Psoas muscle (tissue), 8 donors: ENCODE measurements at regions of chr2 and their contacts with region 1.

Region 1: GRCh38 chr2:235116885-235117492 is 165.2 kb downstream of the SH3BP4 start:
- DNase-seq: no peak
- ATAC-seq: no peak
- H3K4me3 ChIP-seq: no peak overlapping the region
- H3K27ac ChIP-seq: no peak overlapping the region
- H3K4me1 ChIP-seq: no peaks in the 10 kb centered on the region
- H3K27me3 ChIP-seq: no peaks in the 10 kb centered on the region
- CTCF ChIP-seq: peak; percentile 66

Region 2: DNA sequence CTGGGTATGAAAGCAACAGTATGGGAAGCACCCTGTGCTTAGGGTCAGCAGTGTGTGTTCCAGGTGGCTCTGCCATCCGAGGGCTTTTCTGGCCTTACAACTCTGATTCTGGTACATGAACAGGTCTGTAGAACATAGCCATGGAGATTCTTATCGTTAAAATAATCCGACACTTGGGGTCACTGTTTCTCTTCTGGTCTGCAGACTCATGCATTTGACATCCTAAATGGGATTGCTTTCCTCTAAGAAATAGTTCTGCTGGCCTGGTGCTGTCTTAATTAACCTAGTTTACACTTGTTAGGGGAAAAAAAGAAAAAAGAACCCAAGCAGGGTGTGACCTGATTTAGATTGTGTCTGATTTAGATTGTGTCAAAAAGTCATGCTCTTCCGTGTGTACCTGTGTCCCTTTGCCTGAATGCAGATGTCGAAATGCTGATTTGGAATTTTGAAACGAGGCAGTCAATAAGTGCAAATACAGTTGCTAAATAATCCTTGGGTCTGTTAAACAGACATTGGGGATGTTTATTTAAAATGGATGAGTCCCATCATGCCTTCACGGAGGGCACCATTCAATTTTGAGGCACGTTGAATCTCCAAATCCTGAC is 1140.2 kb before region 1 on chr2:
- intact Hi-C with region 1: loop called in 1 of 2 experiments (anchors 10 kb)
- DNase-seq: no peak
- ATAC-seq: no peak
- H3K4me3 ChIP-seq: no peak overlapping the region
- H3K27ac ChIP-seq: no peak overlapping the region
- H3K4me1 ChIP-seq: no peaks in the 10 kb centered on the region
- H3K27me3 ChIP-seq: peaks cover 0 to 2% (median 0%) of the 10 kb centered on the region in 3 donors
- CTCF ChIP-seq: no peak

Region 3: GRCh38 chr2:235303499-235304291 is 186.7 kb after region 1 on chr2:
- intact Hi-C with region 1: no loop called
- DNase-seq: no peak
- ATAC-seq: no peak
- H3K4me3 ChIP-seq: no peak overlapping the region
- H3K27ac ChIP-seq: no peak overlapping the region
- H3K4me1 ChIP-seq: no peaks in the 10 kb centered on the region
- H3K27me3 ChIP-seq: peaks cover 0 to 9% (median 7%) of the 10 kb centered on the region in 3 donors
- CTCF ChIP-seq: no peak

Region 4: GRCh38 chr2:236568068-236568921 is 1451.3 kb after region 1 on chr2:
- intact Hi-C with region 1: no loop called
- DNase-seq: peak; percentile 55 to 82
- ATAC-seq: peak; percentile 37 to 74 (median 59)
- H3K4me3 ChIP-seq: peak overlapping the region; percentile 65
- H3K27ac ChIP-seq: peak overlapping the region; percentile 79
- H3K4me1 ChIP-seq: peaks cover 39% of the 10 kb centered on the region
- H3K27me3 ChIP-seq: no peaks in the 10 kb centered on the region
- CTCF ChIP-seq: no peak